ENCODE measurements at regions of chr2 and their contacts with region 1.

Region 1: GRCh38 chr2:197159661-197160211 is 150.8 kb downstream of the ANKRD44 start:
- DNase-seq: no peak
- H3K4me3 ChIP-seq: no peak overlapping the region
- H3K27ac ChIP-seq: no peak overlapping the region
- H3K4me1 ChIP-seq: no peaks in the 10 kb centered on the region
- H3K27me3 ChIP-seq: no peaks in the 10 kb centered on the region
- CTCF ChIP-seq: no peak

Region 2: GRCh38 chr2:197092431-197092830 is 67.3 kb before region 1 on chr2:
- CTCF ChIA-PET with region 1: no interaction called
- dilution Hi-C with region 1: loop called (anchors 5 kb)
- in situ Hi-C with region 1: no loop called
- intact Hi-C with region 1: no loop called
- DNase-seq: no peak
- H3K4me3 ChIP-seq: no peak overlapping the region
- H3K27ac ChIP-seq: no peak overlapping the region
- H3K4me1 ChIP-seq: peaks cover 4% of the 10 kb centered on the region
- H3K27me3 ChIP-seq: no peaks in the 10 kb centered on the region
- CTCF ChIP-seq: no peak